ENCODE measurements at regions of chr1 and their contacts with region 1.

Region 1: DNA sequence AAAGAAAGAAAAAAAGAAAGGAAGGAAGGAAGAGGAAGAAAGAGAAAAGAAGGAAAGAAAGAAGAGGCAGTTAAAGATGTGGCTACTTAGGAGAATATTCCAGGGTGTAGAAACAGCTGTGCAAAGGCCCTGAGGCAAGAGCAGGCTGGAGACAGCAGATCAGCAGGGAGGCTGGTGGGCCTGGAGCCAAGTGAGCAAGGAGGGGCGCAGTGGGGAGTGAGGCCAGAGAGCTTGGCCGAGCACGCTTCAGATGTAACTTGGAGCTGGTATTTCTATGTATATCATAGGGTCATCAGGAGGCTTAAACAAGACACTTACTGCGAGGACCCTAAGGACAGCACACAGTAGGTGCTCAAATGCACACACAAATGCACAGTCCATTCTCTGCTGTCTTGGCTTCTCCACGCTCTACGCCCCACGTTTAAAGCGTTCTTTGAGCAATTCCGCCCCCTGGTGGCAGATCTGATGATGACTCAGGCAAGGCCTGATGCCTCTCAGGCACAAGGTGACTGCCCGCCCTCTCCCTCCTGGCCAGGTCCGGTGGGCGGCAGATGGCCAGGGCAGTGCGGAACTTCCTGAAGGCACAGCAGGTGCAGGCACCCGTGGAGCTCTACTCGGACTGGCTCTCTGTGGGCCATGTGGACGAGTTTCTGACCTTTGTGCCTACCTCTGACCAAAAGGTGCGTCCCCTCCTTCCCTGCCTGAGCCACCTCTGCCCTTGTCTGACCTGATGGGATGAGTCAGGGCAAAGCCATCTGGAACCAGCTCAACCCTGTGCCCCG is 11.9 kb upstream of the PADI3 start:
- DNase-seq: peak; percentile 55
- H3K4me3 ChIP-seq: no peak overlapping the region
- H3K27ac ChIP-seq: no peak overlapping the region
- H3K27me3 ChIP-seq: peaks cover 4% of the 10 kb centered on the region
- CTCF ChIP-seq: peak; percentile 81

Region 2: GRCh38 chr1:17059739-17060460 is 177.1 kb before region 1 on chr1:
- CTCF ChIA-PET with region 1: interaction called, 18 read pairs
- POLR2A ChIA-PET with region 1: no interaction called
- DNase-seq: peak; percentile 26
- H3K4me3 ChIP-seq: no peak overlapping the region
- H3K27ac ChIP-seq: no peak overlapping the region
- H3K27me3 ChIP-seq: peaks cover 7% of the 10 kb centered on the region
- CTCF ChIP-seq: peak; percentile 84

Region 3: DNA sequence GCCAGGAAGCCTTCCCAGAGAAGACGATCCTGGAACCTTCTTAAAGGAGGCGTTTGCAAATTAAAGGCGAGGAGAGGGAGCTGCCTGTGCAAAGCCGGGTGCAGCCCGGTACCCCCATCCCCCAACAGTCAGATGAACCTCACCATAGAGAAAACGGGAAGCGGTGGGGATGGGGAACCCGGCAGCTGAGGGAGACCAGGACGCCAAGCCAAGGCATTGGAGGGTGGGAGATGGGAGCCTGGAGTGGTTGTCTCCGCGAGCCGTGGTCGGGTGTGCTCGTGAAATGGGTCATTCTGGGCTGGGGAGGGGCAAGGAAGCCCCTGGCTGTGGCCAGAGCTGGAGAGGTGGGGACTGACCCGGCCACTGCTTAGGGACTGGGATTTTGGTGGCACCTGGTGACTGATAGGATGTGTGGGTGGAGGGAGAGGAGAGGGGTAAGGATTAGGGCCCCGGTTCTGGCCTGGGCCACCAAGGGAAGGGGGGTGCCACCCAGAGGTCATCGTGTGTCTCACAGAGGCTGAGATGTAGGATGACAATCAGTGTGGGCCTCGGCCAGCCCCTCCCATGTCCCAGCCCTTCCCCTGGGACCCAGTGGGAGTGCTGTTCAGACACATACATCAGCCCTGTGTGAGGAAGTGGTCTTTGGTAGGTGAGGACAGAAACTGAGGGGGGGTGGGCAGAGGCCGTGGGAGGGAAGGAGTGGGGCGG is 117.0 kb before region 1 on chr1:
- CTCF ChIA-PET with region 1: interaction called, 282 read pairs
- POLR2A ChIA-PET with region 1: interaction called, 5 read pairs
- DNase-seq: no peak
- H3K4me3 ChIP-seq: no peak overlapping the region
- H3K27ac ChIP-seq: no peak overlapping the region
- H3K27me3 ChIP-seq: peaks cover 41% of the 10 kb centered on the region
- CTCF ChIP-seq: no peak

Region 4: GRCh38 chr1:17259233-17259873 is 22.4 kb after region 1 on chr1:
- CTCF ChIA-PET with region 1: interaction called, 13 read pairs
- POLR2A ChIA-PET with region 1: no interaction called
- DNase-seq: no peak
- H3K4me3 ChIP-seq: no peak overlapping the region
- H3K27ac ChIP-seq: no peak overlapping the region
- H3K27me3 ChIP-seq: peaks cover 11% of the 10 kb centered on the region
- CTCF ChIP-seq: no peak

Region 5: DNA sequence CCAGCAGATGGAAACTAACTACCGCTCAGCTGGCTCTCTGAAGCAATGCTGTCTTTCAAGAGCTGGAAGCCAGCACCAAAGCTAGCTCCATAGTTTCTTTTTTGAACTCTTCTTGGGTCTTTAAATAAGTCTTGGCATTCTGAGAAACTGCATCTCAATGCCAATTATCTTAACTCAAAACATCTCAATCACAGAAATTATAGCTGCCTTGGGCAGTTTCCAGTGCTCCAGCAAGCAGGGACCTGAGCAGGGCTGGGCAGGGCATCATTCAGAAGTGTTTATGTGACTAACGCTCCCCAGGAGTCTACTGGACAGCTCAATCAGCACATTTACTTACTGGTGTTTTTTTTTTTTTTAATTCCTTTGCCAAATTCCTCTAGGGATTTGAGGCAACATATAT is 52.8 kb after region 1 on chr1:
- CTCF ChIA-PET with region 1: no interaction called
- POLR2A ChIA-PET with region 1: no interaction called
- DNase-seq: no peak
- H3K4me3 ChIP-seq: no peak overlapping the region
- H3K27ac ChIP-seq: no peak overlapping the region
- H3K27me3 ChIP-seq: peaks cover 18% of the 10 kb centered on the region
- CTCF ChIP-seq: no peak